Dorsolateral prefrontal cortex (tissue), 120 donors: ENCODE measurements at regions of chr3 and their contacts with region 1.

Region 1: DNA sequence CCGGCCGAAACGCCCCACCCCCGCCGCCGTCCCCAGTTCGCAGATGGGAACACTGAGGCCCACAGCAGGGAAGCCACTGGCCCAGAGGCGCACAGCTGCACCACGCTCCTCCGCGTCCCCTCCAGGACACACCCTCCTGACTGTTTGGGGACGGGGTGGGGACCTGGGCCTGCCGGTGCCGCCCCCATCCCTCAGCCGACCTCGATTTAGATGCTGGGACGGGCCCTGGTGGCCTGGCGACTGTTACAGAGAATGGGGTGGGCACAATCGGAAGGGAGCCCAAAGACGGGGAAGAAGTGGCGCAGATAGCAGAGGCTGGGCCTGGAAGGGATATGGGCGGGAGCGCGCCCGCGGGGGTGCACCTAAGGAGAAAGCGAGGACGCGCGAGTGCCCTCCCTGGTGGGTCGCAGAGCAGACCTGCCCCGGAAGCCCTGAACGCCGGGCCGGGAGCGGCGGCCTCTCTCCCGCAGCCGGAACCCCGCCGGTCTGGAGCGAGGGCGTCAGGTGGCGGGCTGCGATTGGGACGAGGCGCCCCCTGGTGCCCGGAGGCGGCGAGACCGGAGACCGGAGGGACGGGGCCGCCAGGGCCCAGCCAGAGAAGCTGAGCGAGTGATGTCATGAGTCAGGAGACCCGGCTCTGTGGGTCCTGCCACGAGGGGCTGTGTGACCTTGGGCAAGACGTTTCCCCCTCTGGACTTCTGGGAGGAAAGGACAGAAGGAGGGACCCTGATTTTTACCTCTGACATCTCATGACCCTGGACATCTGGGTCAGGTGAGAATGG is 78.4 kb downstream of the IQSEC1 start:
- DNase-seq: peak; percentile 71 to 93 (median 80)
- H3K4me3 ChIP-seq: peak overlapping the region; percentile 54 to 97 (median 78)
- H3K27ac ChIP-seq: peak overlapping the region; percentile 55 to 96 (median 87)
- H3K27me3 ChIP-seq: no peaks in the 10 kb centered on the region
- CTCF ChIP-seq: peak; percentile 74 to 98 (median 95)

Region 2: GRCh38 chr3:12822725-12823373 is 171.9 kb before region 1 on chr3:
- intact Hi-C with region 1: no loop called
- DNase-seq: no peak
- H3K4me3 ChIP-seq: no peak overlapping the region
- H3K27ac ChIP-seq: no peak overlapping the region
- H3K27me3 ChIP-seq: no peaks in the 10 kb centered on the region
- CTCF ChIP-seq: peak in 19 of 56 donors; percentile 7 to 35 (median 19)

Region 3: GRCh38 chr3:12870942-12871341 is 123.9 kb before region 1 on chr3:
- intact Hi-C with region 1: loop called in 1 of 2 experiments (anchors 2 kb)
- DNase-seq: no peak
- H3K4me3 ChIP-seq: no peak overlapping the region
- H3K27ac ChIP-seq: no peak overlapping the region
- H3K27me3 ChIP-seq: peaks cover 0 to 3% (median 0%) of the 10 kb centered on the region in 45 donors
- CTCF ChIP-seq: no peak

Region 4: DNA sequence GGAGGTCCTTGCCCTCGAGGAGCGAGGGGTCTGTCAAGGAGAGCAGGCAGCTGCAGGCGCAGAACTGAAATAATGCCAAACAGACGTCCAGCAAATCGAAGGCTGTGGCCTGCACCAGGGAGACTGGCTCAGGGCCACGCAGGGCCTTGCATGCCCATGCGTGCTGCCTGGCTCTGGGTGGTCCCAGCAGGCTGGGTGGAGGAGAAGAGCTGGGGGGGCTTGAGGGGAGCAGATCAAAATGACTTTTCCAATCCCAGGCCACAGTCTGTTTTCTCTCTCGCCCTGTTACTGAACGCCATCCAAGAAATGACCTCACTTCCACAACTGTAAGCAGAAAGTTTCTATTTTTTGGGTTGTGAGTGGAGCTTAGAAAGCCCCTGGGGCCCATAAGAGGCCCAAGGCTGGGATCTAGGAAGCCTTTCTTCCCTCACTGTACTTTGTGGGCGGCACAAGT is 56.5 kb before region 1 on chr3:
- intact Hi-C with region 1: no loop called
- DNase-seq: no peak
- H3K4me3 ChIP-seq: no peak overlapping the region
- H3K27ac ChIP-seq: peak overlapping the region in 55 of 59 donors; percentile 5 to 83 (median 65)
- H3K27me3 ChIP-seq: no peaks in the 10 kb centered on the region
- CTCF ChIP-seq: no peak

Region 5: GRCh38 chr3:12954891-12955650 is 39.7 kb before region 1 on chr3:
- intact Hi-C with region 1: no loop called
- DNase-seq: peak in 5 of 10 donors; percentile 42 to 74 (median 62)
- H3K4me3 ChIP-seq: peak overlapping the region in 4 of 59 donors; percentile 3 to 31 (median 10)
- H3K27ac ChIP-seq: peak overlapping the region in 57 of 59 donors; percentile 42 to 90 (median 79)
- H3K27me3 ChIP-seq: no peaks in the 10 kb centered on the region
- CTCF ChIP-seq: peak in 25 of 56 donors; percentile 12 to 47 (median 28)

Region 6: DNA sequence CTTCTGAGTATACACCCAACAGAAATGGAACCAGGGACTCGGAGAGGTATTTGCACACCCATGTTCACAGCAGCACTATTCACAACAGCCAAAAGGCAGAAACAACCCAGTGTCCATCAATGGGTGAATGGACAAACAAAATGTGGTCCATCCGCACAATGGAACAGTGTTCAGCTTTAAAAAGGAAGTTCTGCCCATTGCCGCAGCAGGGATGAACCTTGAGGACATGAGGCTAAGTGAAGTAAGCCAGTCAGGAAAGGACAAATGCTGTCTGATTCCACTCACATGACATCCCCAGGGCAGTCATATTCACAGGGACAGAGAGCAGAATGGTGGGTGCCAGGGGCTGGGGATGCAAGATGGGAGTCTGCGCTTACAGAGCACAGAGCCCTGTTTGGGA is 70.9 kb after region 1 on chr3:
- intact Hi-C with region 1: loop called (anchors 2 to 5 kb)
- DNase-seq: no peak
- H3K4me3 ChIP-seq: peak overlapping the region in 16 of 59 donors; percentile 3 to 32 (median 14)
- H3K27ac ChIP-seq: peak overlapping the region in 45 of 59 donors; percentile 3 to 79 (median 59)
- H3K27me3 ChIP-seq: no peaks in the 10 kb centered on the region
- CTCF ChIP-seq: no peak

Region 7: DNA sequence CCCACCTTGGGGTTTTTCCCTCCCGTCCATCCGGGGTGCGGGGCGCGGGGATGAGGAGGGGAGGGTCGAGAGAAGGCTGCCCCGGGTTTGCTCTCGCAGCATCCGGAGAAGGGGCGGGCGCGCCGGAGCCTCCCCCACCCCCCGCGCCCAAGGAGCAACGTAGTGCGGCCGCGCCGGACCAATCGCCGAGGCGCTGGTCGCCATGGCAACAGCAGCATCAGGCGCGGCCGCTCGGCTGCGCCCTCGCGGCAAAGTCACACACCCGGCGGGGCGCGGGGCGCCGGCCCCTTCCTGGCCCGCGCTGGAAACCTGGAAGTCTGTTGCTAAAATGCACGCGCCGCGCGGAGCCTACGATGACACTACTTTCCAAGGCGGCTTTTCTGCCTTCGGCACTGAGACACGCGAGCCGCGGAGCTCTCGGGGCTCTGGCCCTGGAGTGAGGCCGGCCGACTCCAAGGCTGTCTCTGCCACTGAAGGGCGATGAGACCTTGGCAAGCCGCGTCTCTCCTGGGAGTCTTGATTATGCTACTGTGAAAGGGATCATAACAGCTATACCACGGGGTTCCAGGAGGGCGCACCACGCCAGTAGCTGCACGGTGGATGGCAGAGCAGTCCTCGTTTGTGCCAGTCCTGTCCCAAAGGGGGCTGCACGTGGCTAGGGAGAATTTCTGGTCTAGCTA is 78.7 kb after region 1 on chr3 and contains the start of gene IQSEC1:
- intact Hi-C with region 1: loop called in 1 of 2 experiments (anchors 5 kb)
- DNase-seq: peak; percentile 80 to 91 (median 88)
- H3K4me3 ChIP-seq: peak within 1 kb of the TSS; percentile 49 to 83 (median 67)
- H3K27ac ChIP-seq: peak within 1 kb of the TSS; percentile 35 to 97 (median 90)
- H3K27me3 ChIP-seq: no peaks in the 10 kb centered on the region
- CTCF ChIP-seq: peak in 15 of 56 donors; percentile 4 to 35 (median 18)
- total RNA-seq, gene IQSEC1: 128 to 330 (median 245) TPM